Activated T-helper 2 cell treated with anti-CD3 and anti-CD28 coated beads, Interferon-gamma antibody, Interleukin-2, Interleukin-4, amounts not matched to agents 10 μg/mL and 5 μg/mL and 100 μg/mL, durations not matched to agents 14 hours and 24 hours and 36 hours (primary cell): ENCODE measurements at regions of chr5 and their contacts with region 1.

Region 1: DNA sequence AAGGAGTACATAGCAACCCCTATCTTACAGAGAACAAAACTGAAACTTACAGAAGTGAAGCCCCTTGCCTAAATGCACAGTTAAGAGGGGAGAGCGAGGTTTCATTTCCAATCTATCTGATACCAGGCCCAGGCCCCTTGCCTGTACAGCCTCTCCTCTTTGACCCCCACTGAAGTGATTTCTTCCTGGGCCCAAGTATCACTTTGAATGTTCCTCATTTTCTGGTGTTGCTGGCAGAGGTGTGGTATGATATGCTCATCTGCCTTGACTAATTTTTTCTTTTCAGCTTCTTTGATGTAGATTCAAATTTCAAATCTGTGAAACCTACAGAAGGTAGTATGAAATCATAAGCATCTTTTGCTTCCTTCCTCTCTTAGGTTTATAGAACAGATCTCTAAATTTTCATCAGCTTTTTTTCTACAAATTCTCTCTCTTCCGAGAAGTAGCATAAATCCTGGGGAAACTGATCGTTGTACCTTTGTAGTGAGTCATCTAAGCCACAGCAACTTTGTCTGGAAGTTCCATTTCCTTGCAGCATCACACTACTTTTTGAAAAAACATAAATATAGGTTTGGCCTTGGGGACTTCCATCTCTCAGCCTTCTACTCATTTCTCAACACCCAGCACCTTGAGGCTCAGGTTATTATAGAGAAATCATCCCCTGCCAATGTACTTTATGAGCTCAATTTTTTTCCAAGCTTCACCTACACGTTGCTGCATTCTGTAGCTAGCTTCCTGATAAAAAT is 402.4 kb upstream of the PTGER4 start:
- DNase-seq: peak; percentile 22
- H3K4me3 Mint-ChIP-seq: peak overlapping the region; percentile 5
- H3K27ac Mint-ChIP-seq: peak overlapping the region; percentile 87
- H3K4me1 Mint-ChIP-seq: peaks cover 53% of the 10 kb centered on the region
- H3K27me3 Mint-ChIP-seq: no peaks in the 10 kb centered on the region

Region 2: DNA sequence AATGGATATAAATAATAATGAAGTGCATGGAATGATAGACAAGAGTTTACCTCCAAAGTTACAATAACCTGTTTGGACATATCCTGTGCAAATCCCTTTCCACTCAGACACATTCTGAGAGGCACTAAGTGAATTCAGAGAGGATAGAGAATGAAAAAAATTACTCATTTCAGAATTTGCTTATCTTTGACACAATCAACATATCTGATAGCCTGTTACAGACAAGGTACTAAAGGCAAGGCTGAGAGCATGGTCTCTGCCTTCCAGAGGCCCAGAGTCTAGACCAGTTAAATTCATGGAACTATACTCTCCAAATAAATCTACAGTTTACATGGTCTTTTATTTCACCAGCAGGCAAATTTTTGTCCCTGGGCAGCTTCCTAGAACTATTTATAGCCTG is 30.6 kb after region 1 on chr5:
- intact Hi-C with region 1: loop called (anchors 1 kb)
- DNase-seq: no peak
- H3K4me3 Mint-ChIP-seq: no peak overlapping the region
- H3K27ac Mint-ChIP-seq: no peak overlapping the region
- H3K4me1 Mint-ChIP-seq: peaks cover 19% of the 10 kb centered on the region
- H3K27me3 Mint-ChIP-seq: no peaks in the 10 kb centered on the region

Region 3: DNA sequence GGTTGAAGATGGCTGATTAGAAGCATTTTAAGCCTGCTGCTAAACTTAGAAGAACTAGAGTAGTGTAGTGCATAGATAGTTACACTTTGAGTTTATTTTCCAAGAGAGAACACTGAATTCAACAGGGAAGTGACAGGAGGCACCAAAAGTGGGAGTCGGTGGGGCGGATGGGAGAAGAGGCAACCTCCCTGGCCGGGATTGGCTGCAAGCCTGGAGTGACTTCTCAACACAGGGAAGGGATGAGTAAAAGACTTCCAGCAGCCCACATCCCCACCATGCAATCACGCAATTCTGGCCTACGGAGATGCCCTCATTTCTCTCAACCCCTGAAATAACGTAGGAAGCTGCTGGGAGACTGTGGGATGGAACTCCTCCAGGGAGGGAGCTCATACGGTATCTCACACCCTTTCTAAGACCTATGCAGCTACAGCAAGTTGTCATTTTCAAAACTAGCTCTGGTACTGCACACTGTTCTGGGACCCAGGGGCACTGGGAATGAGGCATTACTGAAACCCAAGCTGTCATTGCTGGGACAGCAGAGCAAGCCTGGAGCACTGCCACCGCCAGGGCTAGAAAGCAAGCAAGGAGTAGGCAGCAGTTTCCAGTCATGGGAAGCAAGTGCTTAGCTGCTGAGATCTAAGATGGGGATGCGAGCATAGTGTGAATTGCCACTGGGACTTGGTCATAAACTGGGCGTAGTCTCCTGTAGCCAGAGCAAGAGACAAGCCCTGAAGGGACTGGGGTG is 70.8 kb after region 1 on chr5:
- intact Hi-C with region 1: no loop called
- DNase-seq: no peak
- H3K4me3 Mint-ChIP-seq: no peak overlapping the region
- H3K27ac Mint-ChIP-seq: no peak overlapping the region
- H3K4me1 Mint-ChIP-seq: no peaks in the 10 kb centered on the region
- H3K27me3 Mint-ChIP-seq: no peaks in the 10 kb centered on the region

Region 4: DNA sequence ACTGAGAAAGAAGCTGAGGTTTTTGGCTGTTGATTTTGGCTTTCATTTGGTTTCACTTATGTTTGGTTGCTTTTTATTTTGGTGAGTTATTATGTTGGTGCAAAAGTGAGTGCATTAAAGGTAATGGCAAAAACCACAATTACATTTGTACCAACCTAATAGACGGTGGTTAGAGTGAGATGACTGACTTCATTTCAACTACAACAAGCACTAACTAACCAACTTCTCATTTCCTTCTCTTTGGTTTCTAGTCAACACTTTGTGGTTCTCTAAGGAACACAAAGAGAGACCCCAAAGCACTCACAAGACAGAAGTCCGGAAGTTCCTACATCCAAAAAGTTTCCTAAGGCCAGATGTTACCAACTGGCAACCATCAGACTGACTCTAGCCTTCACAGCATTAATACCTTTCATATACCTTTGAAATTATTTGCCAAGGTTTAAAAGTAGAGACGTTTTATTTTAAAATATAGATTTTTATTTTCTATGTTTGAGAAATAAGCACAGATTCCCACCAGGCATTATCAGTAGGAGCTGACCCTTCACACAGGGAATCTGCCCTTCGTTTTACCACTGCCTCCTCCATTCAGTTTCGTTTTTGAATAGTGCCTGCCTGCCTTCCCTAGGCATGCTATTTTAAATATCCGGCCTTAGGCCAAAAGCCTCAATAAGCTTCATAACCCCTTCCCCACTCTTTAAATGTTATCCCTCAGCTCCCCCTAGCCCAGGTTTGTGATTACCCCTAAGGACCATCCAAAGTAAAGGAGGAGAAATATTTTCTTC is 101.3 kb after region 1 on chr5:
- intact Hi-C with region 1: no loop called
- DNase-seq: no peak
- H3K4me3 Mint-ChIP-seq: no peak overlapping the region
- H3K27ac Mint-ChIP-seq: peak overlapping the region; percentile 75
- H3K4me1 Mint-ChIP-seq: peaks cover 46% of the 10 kb centered on the region
- H3K27me3 Mint-ChIP-seq: no peaks in the 10 kb centered on the region

Region 5: DNA sequence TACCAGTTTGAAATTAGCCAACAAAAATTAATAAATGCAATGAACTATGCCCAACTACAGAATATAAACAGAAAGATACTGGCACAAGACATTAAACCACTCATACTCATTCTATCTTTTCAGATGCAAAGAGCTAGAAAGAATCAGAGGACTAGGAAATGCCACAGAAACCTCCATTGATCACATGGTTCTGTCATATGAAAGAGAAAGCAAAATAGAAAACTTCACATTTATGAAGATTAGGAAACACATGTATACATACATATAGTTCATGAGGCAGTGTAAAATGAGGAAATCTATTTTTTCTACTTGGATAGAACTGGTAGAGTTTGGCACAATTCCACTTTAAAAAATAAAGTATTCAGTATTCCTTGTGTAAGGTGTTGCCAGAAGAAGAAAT is 127.3 kb after region 1 on chr5:
- intact Hi-C with region 1: loop called (anchors 1 kb)
- DNase-seq: no peak
- H3K4me3 Mint-ChIP-seq: peak overlapping the region; percentile 37
- H3K27ac Mint-ChIP-seq: peak overlapping the region; percentile 84
- H3K4me1 Mint-ChIP-seq: peaks cover 77% of the 10 kb centered on the region
- H3K27me3 Mint-ChIP-seq: no peaks in the 10 kb centered on the region

Region 6: DNA sequence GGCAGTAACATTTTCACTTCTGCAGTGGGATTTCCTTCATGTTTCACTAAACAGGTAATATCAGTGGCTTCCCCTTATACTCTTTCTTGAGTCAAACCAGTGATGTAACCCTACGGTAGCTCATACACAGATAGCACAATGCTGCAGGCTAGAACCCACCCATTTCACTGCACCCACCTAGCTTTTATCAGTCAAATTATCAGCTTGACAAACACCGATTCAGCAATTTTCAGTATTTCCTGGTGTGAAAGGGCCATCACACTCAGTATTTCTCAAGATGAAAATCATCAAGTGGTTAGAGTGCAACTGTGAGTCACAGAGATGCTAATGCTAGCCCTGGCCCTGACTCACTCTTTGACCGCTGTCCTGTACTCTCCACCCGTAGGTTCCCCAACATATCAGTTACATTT is 160.1 kb after region 1 on chr5:
- intact Hi-C with region 1: loop called (anchors 1 kb)
- DNase-seq: no peak
- H3K4me3 Mint-ChIP-seq: no peak overlapping the region
- H3K27ac Mint-ChIP-seq: peak overlapping the region; percentile 77
- H3K4me1 Mint-ChIP-seq: peaks cover 74% of the 10 kb centered on the region
- H3K27me3 Mint-ChIP-seq: no peaks in the 10 kb centered on the region

Region 7: DNA sequence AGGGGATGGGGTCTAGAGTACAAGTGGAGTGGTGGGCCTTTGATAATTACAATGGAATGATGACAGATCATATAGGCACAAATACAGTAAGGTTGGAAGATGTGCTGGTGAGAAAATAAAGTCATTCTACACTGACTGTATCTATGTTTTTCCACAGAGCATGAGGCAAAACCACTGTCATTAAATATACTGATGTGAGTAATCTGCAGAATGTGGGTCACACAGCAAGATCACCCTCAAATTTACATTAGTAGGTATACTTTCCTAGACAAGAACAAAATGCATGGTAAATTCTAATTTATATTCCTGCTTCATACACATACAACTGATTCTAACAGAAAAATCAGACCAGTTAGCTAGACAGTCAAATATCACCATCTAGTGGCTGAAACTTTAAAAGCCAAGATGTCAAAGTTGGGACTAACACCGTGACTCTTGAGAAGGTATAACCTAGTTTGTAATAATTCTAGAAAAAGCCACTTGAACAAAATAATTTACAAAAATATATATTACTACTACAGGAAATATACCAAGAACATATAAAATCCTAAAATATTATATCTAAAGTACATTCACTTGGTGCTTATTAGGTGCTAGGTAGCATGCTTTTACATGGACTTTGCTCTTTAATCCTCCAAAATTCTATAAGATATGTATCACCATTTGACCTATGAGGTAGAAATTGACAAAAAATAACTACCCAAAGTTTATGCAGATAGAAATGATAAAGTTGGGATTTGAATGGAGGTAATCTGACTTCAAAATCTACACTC is 459.0 kb after region 1 on chr5:
- intact Hi-C with region 1: loop called (anchors 10 kb)
- DNase-seq: no peak
- H3K4me3 Mint-ChIP-seq: no peak overlapping the region
- H3K27ac Mint-ChIP-seq: peak overlapping the region; percentile 17
- H3K4me1 Mint-ChIP-seq: peaks cover 28% of the 10 kb centered on the region
- H3K27me3 Mint-ChIP-seq: no peaks in the 10 kb centered on the region